Calu3 (cell line): ENCODE measurements at regions of chr2 and their contacts with region 1.

Region 1: DNA sequence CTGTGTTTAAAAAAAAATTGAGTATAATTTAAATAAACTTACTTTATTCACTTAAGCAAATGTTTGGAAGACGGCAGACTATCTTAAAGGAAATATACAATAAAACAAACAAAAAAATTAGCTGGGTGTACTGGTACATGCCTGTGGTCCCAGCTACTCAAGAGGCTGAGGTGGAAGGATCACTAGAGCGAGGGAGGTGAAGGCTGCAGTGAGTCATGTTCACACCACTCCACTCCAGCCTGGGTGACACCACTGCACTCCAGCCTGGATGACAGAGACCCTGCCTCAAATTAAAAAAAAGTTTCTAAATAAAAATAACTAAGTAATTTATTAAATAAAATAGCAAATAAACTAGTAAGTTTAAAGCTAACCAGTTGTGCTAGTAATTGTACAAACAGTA is 7.5 kb downstream of the PUM2 start:
- DNase-seq: peak; percentile 21
- H3K4me3 Mint-ChIP-seq: no peak overlapping the region
- H3K27ac Mint-ChIP-seq: no peak overlapping the region
- H3K4me1 Mint-ChIP-seq: peaks cover 35% of the 10 kb centered on the region
- H3K27me3 Mint-ChIP-seq: no peaks in the 10 kb centered on the region
- CTCF ChIP-seq: no peak

Region 2: DNA sequence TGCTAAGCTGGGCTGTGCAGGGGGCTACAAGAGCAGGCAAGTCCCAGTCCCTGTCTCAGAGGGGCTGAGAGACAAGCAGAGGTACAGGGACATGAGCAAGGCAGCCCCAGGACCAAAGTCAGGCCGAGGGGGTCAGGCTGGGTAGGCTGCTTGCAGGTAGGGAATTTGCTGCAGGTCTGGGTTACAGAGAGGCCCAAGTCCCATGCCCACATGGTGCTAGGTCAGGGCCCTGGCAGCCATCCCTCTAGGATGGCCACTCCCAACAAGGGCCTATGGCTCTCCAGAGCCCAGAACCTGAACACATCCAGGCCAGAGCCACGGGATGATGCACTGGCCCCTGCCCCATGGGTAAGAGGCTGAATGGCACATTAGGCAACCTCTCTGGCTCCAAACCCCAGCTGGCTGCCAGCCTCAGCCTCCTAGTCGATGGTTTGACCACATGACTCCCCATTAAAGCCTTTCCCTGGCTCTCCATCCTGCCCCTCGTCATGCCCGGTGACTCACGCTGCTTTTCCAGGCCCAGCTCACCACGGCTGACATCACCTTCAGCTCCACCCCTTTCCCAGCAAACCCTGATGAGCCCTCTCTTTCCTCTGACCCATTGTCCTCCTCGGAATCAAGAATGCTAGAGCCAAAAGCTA is 201.9 kb before region 1 on chr2:
- CTCF ChIA-PET with region 1: no interaction called
- intact Hi-C with region 1: no loop called
- DNase-seq: peak; percentile 75
- H3K4me3 Mint-ChIP-seq: no peak overlapping the region
- H3K27ac Mint-ChIP-seq: peak overlapping the region; percentile 75
- H3K4me1 Mint-ChIP-seq: peaks cover 70% of the 10 kb centered on the region
- H3K27me3 Mint-ChIP-seq: no peaks in the 10 kb centered on the region
- CTCF ChIP-seq: no peak

Region 3: DNA sequence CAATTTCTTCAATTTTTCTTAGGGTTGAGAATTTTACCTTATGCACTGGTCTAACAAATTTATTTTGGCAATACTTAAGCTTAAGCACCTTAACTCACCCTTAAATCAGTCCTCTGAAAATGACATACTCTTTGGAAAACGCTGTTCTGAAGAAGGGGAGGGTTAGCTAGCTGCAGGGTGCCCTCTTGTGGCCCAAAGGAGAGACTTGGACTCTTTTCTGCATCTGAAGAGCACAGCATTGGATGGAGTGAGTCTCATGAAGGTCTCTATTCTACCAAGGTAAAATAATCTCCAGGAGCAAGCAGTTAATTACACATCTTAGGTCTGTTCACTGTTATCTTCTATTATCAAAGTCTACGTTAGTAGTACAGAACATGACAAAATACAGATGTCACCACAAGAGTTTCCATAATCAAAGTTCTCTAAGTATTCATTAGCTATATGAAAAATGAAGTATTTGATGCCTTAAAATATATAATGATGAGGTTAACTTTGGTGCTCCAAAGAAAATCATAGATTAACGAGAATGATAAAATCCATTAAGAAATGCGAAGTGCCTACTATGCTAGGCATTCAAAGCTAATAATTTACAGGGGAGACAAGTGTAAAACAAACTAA is 16.9 kb before region 1 on chr2:
- CTCF ChIA-PET with region 1: interaction called, 3 read pairs
- intact Hi-C with region 1: loop called (anchors 2 kb)
- DNase-seq: peak; percentile 60
- H3K4me3 Mint-ChIP-seq: peak overlapping the region; percentile 6
- H3K27ac Mint-ChIP-seq: peak overlapping the region; percentile 28
- H3K4me1 Mint-ChIP-seq: peaks cover 49% of the 10 kb centered on the region
- H3K27me3 Mint-ChIP-seq: no peaks in the 10 kb centered on the region
- CTCF ChIP-seq: peak; percentile 58